GM10248 (cell line): ENCODE measurements at regions of chr5 and their contacts with region 1.

Region 1: DNA sequence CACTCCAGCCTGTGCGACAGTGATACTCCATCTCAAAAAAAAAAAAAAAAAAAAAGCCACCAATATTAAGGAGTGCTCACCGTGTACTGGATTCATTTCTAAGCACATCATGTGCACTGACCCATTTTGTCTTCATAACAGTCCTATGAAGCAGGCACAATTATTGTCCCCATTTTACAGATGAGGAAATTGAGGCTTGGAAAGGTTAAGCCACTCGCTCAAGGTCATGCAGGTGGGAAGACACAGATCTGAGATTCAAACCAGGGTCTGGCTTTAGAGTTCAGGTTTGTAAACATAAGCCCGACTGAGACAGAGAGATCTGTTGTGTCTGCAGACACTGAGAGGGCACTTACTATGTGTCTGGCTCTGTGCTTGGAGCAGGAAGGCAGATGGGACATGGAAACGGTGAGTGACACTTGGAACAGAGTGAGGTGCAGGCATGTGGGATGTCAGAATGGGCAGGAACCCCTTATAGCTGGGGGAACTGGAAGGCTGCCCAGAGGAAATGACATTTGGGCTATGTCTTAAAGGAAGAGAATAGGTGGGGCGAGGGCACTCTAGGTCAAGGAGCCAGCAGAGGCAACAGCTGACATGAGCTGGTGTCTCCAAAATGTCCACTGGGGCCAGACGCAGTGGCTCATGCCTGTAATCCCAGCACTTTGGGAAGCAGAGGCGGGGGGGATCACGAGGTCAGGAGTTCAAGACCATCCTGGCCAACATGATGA is 69.9 kb downstream of the STK10 start:
- DNase-seq: no peak
- CTCF ChIP-seq: no peak

Region 2: DNA sequence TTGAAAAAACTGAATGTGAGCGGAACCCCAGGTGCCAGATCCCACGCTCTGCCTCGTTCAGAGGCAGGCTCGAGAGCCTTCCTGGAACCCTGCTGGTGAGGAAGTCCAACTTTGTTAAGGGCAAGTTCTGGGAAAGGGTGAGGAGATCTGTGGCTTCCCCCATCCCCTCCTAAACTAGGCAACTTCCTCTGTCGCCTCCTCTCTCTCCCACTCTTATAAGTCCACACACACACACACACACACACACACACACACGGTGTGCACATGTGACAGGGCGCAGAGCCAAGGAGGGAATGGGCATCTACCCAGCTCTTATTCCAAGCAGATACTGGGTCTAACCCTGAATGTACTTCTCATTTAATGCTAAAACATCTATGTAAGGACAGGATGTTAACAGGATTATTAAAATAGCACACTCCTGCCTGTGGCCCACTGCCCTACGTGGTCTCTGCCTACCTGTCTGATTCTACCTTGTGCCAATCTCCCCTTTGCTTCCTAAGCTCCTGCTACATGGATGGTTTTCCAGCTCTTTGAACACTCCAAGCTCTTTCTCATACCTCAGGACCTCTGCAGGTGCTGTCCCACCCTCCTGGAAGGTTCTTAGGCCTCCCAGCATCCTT is 39.3 kb before region 1 on chr5:
- CTCF ChIA-PET with region 1: interaction called, 3 read pairs
- POLR2A ChIA-PET with region 1: interaction called, 14 read pairs
- DNase-seq: no peak
- CTCF ChIP-seq: no peak

Region 3: GRCh38 chr5:172574871-172575223 is 456.7 kb after region 1 on chr5:
- CTCF ChIA-PET with region 1: no interaction called
- POLR2A ChIA-PET with region 1: no interaction called
- DNase-seq: no peak
- CTCF ChIP-seq: no peak